Right cardiac atrium (tissue), 5 donors: ENCODE measurements at regions of chr1 and their contacts with region 1.

Region 1: GRCh38 chr1:173429471-173430402 is 47.4 kb upstream of the PRDX6 start:
- DNase-seq: peak; percentile 94 to 97 (median 96)
- ATAC-seq: peak; percentile 99
- H3K4me3 ChIP-seq: peak overlapping the region; percentile 14
- H3K27ac ChIP-seq: peak overlapping the region; percentile 92
- H3K4me1 ChIP-seq: peaks cover 2% of the 10 kb centered on the region
- H3K27me3 ChIP-seq: no peaks in the 10 kb centered on the region

Region 2: DNA sequence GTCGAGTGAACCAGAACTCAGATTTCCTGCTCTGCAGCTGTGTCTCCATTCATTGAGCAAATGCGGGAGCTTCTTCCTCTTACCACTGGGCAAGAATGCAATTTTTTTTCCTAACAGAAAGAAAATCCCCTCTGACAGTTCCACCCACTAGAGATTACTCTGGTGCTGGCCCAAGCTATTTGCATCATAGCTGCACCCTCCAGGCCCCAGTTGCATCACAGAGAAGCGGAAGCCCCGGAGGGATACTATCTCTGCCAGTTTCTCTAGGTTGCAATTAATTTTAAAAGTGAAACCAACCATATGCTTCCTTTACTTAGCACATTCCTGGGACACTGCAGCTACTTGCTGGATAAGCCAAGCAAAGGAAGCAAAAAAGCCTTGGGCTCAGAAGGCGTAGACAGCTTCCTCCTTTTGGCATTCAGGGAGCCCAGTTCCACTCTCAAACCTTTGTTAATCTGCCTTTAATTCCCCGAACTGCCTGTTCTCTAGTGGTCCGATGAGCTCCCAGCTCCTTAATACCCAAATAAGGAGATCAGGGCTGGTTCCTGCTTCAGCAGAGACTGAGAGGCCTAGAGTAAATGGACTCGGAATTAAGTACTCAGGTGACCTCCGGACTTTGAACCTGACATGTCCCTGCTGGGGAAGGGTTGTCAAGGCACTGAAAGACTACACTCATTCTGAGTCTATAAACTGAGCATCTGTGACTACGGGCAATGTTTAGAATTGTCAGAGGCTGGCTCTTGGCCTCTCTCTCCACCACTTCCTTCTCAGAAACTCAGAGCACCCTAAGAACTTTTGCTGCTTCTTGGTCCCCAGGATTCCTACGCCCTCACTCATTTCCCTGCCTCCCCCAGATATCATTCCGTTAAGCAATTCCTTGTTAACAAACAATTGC is 306.5 kb before region 1 on chr1:
- intact Hi-C with region 1: no loop called
- DNase-seq: peak; percentile 82 to 88 (median 83)
- ATAC-seq: peak; percentile 96 to 98
- H3K4me3 ChIP-seq: peak overlapping the region; percentile 49
- H3K27ac ChIP-seq: peak overlapping the region; percentile 77
- H3K4me1 ChIP-seq: peaks cover 3% of the 10 kb centered on the region
- H3K27me3 ChIP-seq: no peaks in the 10 kb centered on the region

Region 3: DNA sequence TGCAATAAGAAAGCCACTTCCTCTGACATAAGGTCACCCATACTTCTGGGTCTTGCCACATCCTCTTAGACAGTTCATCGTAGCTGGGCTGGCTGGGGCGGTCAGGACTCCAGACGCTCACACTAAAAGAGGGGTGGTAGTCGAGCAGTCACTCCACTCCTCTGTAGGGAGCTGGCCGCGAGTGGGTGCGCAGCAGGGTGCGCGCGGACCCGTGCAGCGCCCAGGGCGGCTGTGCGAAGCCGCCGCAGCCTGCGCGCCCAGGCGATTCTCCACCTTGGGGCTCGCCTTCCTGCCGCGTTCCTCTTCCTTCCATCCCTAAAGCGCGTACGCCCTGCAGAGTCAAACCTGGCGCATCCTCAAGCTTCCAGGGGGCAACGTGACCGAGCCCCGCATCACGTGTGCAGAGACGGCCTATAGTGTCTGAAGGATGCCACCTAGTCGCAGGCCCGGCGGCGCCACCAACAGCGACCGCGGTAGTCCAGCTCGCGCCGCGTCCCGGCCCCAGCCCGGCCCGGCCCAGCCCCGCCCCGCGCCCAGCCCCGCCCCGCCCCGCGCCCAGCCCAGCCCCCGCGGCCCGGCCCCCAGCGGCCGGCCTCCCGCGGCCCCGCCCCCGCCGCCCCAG is 47.0 kb after region 1 on chr1:
- intact Hi-C with region 1: loop called in 2 of 4 experiments (anchors 5 kb)
- DNase-seq: peak; percentile 92 to 97 (median 97)
- ATAC-seq: peak; percentile 91 to 93
- H3K4me3 ChIP-seq: peak overlapping the region; percentile 71
- H3K27ac ChIP-seq: peak overlapping the region; percentile 96
- H3K4me1 ChIP-seq: peaks cover 4% of the 10 kb centered on the region
- H3K27me3 ChIP-seq: no peaks in the 10 kb centered on the region

Region 4: DNA sequence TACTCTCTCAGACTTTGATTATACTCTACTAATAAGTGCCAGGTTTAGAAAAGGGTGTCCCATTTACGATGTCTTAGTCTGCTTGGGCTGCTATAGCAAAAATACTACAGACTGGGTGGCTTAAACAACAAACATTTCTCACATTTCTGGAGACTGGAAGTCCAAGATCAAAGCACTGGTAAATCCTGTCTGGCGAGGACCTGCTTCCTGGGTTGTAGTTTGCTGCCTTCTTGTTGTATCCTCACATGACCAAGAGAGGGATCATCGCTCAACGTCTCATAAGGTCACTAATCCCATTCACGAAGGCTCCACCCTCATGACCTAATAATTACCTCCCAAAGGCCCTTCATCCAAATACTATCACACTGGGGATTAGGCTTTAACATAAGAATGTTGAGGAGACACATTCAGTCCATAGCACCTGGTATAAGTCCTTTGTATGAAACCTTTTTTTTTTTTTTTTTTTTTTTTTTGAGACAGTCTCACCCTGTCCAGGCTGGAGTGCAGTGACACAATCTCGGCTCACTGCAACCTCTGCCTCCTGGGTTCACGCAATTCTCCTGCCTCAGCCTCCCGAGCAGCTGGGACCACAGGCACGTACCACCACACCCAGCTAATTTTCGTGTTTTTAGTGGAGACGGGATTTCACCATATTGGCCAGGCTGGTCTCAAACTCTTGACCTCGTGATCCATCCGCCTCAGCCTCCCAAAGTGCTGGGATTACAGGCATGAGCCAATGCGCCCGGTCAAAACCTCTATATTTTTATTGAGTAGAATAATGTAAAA is 59.6 kb after region 1 on chr1:
- intact Hi-C with region 1: no loop called
- DNase-seq: peak in 1 of 3 donors; percentile 21
- ATAC-seq: peak in 1 of 2 donors; percentile 35
- H3K4me3 ChIP-seq: no peak overlapping the region
- H3K27ac ChIP-seq: no peak overlapping the region
- H3K4me1 ChIP-seq: no peaks in the 10 kb centered on the region
- H3K27me3 ChIP-seq: no peaks in the 10 kb centered on the region

Region 5: GRCh38 chr1:173714759-173715537 is 285.2 kb after region 1 on chr1 and contains the start of gene KLHL20:
- intact Hi-C with region 1: loop called in 1 of 4 experiments (anchors 10 kb)
- DNase-seq: peak; percentile 78 to 90 (median 89)
- ATAC-seq: peak; percentile 98 to 99
- H3K4me3 ChIP-seq: peak within 1 kb of the TSS; percentile 86
- H3K27ac ChIP-seq: peak within 1 kb of the TSS; percentile 80
- H3K4me1 ChIP-seq: peaks cover 2% of the 10 kb centered on the region
- H3K27me3 ChIP-seq: no peaks in the 10 kb centered on the region
- total RNA-seq, gene KLHL20: 17.5 to 22.0 (median 21.6) TPM

Region 6: GRCh38 chr1:173824331-173825081 is 394.8 kb after region 1 on chr1 and contains the starts of genes CENPL and DARS2:
- intact Hi-C with region 1: loop called (anchors 5 to 10 kb)
- DNase-seq: peak; percentile 97 to 99 (median 97)
- ATAC-seq: peak; percentile 98 to 99
- H3K4me3 ChIP-seq: peak within 1 kb of the TSS; percentile 88
- H3K27ac ChIP-seq: peak within 1 kb of the TSS; percentile 99
- H3K4me1 ChIP-seq: no peaks in the 10 kb centered on the region
- H3K27me3 ChIP-seq: no peaks in the 10 kb centered on the region
- total RNA-seq, gene CENPL: 3.0 to 4.3 (median 3.9) TPM
- total RNA-seq, gene DARS2: 11.7 to 13.6 (median 13.1) TPM